ENCODE measurements at regions of chr5 and their contacts with region 1.

Region 1: GRCh38 chr5:95781101-95781583 is 41.4 kb downstream of the GLRX start:
- DNase-seq: no peak
- H3K4me3 ChIP-seq: no peak overlapping the region
- H3K27ac ChIP-seq: peak overlapping the region; percentile 38
- H3K4me1 ChIP-seq: peaks cover 6% of the 10 kb centered on the region
- H3K27me3 ChIP-seq: no peaks in the 10 kb centered on the region
- CTCF ChIP-seq: peak; percentile 89 to 95 (median 90)
- POLR2A ChIP-seq: no peak

Region 2: DNA sequence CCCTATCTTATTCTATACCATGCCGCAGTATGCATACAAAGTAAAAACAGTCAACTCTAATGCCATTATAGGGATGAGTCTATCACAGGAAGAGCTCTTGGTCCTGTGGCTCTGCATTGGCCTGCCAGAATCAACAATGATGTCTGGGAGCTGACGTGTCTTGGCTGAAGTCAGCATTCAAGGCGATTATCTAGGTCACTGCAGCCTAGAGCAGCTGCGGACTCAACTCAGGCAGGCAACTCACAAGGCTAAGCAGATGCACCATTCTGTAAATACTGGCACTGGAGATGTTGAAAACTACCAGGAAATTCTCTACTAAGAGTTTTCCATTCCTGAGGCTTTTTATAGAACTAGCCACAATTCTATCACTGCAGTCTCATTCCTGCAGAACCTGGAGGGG is 111.6 kb before region 1 on chr5:
- intact Hi-C with region 1: loop called (anchors 5 kb)
- DNase-seq: peak in 1 of 2 donors; percentile 94
- H3K4me3 ChIP-seq: no peak overlapping the region
- H3K27ac ChIP-seq: peak overlapping the region; percentile 67
- H3K4me1 ChIP-seq: peaks cover 4% of the 10 kb centered on the region
- H3K27me3 ChIP-seq: no peaks in the 10 kb centered on the region
- CTCF ChIP-seq: no peak
- POLR2A ChIP-seq: no peak

Measured in vagina (tissue), 2 donors.